Left lung (tissue), 14 donors: ENCODE measurements at regions of chr18 and their contacts with region 1.

Region 1: DNA sequence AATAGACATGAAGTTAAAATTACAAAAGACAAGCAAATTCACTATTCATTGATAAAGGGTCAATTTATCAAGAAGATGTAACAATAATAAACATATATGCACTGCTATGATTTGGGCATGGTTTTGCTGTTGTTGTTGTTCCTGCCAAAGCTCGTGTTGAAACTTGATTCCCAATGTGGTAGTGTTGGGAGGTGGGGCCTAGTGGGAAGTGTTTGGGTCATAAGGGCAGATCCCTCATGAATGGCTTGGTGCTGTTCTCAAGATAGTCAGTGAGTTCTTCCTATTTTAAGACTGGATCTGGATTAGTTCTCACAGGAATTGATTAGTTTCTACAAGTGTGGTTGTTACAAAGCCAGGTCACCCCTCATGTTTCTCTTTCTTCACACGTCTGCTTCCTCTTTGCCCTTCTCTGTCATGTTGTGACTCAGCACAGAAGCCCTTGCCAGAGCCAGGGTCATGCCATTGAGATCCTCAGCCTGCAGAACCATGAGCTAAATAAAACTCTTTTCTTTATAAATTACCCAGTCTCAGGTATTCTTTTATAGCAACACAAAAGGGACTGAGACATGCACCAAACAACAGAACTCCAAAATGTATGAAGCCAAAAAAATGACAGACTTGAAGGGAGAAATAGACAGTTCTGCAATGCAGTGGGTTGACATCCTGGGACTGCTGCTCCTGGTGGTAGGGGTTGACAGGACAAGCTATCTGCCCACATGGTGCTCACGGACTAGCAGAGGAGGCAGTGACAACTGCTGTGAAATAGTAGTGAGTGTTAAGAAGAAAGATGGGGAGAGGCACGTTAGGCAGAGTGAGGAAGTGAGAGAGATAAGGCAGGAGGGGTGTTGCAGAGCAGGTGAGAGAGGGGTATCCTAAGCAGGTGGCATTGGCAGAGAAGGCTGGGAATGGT is 18.6 kb upstream of the SKA1 start:
- DNase-seq: no peak
- ATAC-seq: peak; percentile 69
- H3K4me3 ChIP-seq: no peak overlapping the region
- H3K27ac ChIP-seq: peak overlapping the region in 1 of 2 donors; percentile 34
- H3K4me1 ChIP-seq: peaks cover 0 to 8% of the 10 kb centered on the region in 2 donors
- H3K27me3 ChIP-seq: peaks cover 2 to 57% of the 10 kb centered on the region in 2 donors
- CTCF ChIP-seq: no peak

Region 2: DNA sequence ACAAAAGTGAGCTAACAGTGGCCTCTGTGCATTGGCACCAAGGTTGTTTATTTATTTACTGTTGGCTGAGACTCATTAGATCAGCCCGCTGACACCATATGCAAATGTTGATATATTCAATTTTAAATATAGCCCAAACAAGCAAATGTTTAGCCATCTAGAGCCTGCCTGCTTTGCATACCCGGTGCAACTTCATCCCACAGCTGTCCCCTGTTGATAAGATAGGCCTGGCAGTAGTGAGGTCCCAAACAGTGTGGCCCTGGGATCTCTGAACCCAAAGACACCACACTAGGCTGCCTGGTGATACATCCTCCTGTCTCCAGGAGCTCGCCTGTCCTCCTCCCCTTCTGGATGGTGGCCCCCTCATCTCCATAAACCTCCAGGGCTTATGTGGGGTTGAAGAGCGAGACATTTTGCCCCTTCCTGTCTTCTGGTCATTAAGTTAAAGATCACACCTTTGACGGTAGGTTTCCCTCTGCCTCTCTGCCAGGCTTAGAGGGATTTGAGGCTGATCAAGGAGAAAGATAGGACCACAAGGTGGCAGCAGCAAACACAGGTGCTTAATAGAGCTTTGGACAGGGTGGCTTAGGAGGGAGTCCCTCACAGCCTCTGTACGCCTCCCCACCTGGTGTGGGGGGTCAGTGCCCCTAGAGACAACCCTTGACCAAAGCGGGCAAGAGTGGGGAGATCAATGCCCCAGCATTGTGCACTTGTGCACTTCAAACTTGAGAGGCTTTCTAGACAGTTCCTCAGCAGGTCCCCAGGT is 137.7 kb before region 1 on chr18:
- intact Hi-C with region 1: loop called in 1 of 2 experiments (anchors 10 kb)
- DNase-seq: no peak
- ATAC-seq: peak; percentile 79
- H3K4me3 ChIP-seq: no peak overlapping the region
- H3K27ac ChIP-seq: no peak overlapping the region
- H3K4me1 ChIP-seq: no peaks in the 10 kb centered on the region
- H3K27me3 ChIP-seq: peaks cover 0 to 20% of the 10 kb centered on the region in 2 donors
- CTCF ChIP-seq: peak in 1 of 2 donors; percentile 22